Psoas muscle (tissue), 8 donors: ENCODE measurements at regions of chr6 and their contacts with region 1.

Region 1: DNA sequence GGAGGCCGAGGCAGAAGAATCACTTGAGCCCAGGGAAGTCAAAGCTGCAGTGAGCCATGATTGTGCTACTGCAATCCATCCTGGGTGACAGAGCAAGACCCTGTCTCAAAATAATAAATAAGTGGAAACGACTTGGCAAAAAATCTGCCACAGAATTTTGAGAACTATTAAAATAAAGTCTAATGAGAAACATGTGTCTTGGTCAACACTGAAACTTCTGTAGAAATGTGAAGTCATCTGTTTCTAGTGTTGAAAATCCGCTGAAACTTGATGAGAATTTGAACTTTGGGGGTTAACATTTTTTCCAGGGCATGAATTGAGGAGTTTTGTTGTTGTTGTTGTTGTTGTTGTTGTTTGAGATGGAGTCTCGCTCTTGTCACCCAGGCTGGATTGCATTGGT is 29.0 kb upstream of the BCLAF1 start:
- DNase-seq: no peak
- ATAC-seq: no peak
- H3K4me3 ChIP-seq: no peak overlapping the region
- H3K27ac ChIP-seq: no peak overlapping the region
- H3K4me1 ChIP-seq: no peaks in the 10 kb centered on the region
- H3K27me3 ChIP-seq: no peaks in the 10 kb centered on the region
- CTCF ChIP-seq: no peak

Region 2: GRCh38 chr6:135506270-135506997 is 812.2 kb before region 1 on chr6:
- intact Hi-C with region 1: loop called in 1 of 2 experiments (anchors 2 kb)
- DNase-seq: no peak
- ATAC-seq: peak in 2 of 4 donors; percentile 49 to 74
- H3K4me3 ChIP-seq: no peak overlapping the region
- H3K27ac ChIP-seq: no peak overlapping the region
- H3K4me1 ChIP-seq: no peaks in the 10 kb centered on the region
- H3K27me3 ChIP-seq: no peaks in the 10 kb centered on the region
- CTCF ChIP-seq: peak; percentile 57